Transverse colon (tissue), 4 donors: ENCODE measurements at regions of chr9 and their contacts with region 1.

Region 1: DNA sequence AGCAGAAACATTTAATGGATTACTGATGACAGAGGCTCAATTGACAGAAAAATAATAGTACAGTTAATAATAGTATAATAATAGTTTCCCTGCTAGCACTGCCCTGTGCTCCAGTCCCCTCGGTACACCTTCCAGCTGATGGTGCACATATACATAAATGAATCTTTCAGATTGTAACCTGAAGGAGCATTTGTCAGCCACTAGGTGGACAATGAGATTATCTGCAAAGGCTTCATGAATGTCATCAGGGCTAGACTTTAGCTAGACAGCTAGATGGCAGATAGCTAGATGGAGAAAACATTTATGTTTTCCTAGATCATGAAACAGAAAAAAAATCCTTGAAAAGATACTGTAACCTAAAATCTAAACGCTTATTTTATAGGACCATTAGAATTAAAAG is 304.4 kb upstream of the SMC2 start:
- DNase-seq: no peak
- H3K4me3 ChIP-seq: no peak overlapping the region
- H3K27ac ChIP-seq: no peak overlapping the region
- H3K4me1 ChIP-seq: no peaks in the 10 kb centered on the region
- H3K27me3 ChIP-seq: no peaks in the 10 kb centered on the region
- CTCF ChIP-seq: peak; percentile 12 to 42 (median 30)
- EP300 ChIP-seq: no peak
- POLR2A ChIP-seq: no peak

Region 2: GRCh38 chr9:103899866-103900265 is 110.2 kb after region 1 on chr9:
- in situ Hi-C with region 1: loop called in 1 of 4 experiments (anchors 25 kb)
- intact Hi-C with region 1: no loop called
- DNase-seq: no peak
- H3K4me3 ChIP-seq: no peak overlapping the region
- H3K27ac ChIP-seq: no peak overlapping the region
- H3K4me1 ChIP-seq: no peaks in the 10 kb centered on the region
- H3K27me3 ChIP-seq: no peaks in the 10 kb centered on the region
- CTCF ChIP-seq: no peak
- EP300 ChIP-seq: no peak
- POLR2A ChIP-seq: no peak

Region 3: DNA sequence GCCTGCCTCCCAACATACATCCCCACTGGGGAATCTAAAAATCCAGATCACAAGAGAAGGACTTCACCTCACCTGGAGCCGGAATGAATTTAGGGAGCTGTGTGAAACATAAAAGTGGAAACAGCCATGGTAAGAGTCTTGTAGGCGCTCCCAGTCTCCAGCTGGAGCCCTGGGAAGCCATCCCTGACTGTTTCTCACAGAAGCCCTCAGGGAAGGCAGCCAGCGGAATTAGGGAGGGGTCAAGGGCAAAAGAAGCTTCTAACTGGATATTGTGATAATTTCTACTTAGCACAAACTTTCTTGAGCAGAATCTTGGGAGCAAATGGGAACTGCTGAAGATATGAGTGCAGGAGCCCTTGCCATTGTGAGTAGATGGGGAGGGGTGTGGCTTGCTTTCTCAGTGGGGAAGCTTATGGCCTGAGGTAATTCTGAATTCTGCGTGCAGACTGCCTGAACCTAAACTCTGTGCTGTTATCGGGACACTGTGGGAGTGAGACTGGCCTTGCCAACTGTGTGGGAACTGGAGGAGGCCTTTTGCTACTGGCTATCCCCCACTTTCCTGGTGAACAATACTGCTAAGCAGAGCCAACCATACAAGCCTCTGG is 130.0 kb after region 1 on chr9:
- in situ Hi-C with region 1: no loop called
- intact Hi-C with region 1: no loop called
- DNase-seq: no peak
- H3K4me3 ChIP-seq: no peak overlapping the region
- H3K27ac ChIP-seq: no peak overlapping the region
- H3K4me1 ChIP-seq: no peaks in the 10 kb centered on the region
- H3K27me3 ChIP-seq: no peaks in the 10 kb centered on the region
- CTCF ChIP-seq: no peak
- EP300 ChIP-seq: no peak
- POLR2A ChIP-seq: no peak